Psoas muscle (tissue), 8 donors: ENCODE measurements at regions of chrX and their contacts with region 1.

Region 1: DNA sequence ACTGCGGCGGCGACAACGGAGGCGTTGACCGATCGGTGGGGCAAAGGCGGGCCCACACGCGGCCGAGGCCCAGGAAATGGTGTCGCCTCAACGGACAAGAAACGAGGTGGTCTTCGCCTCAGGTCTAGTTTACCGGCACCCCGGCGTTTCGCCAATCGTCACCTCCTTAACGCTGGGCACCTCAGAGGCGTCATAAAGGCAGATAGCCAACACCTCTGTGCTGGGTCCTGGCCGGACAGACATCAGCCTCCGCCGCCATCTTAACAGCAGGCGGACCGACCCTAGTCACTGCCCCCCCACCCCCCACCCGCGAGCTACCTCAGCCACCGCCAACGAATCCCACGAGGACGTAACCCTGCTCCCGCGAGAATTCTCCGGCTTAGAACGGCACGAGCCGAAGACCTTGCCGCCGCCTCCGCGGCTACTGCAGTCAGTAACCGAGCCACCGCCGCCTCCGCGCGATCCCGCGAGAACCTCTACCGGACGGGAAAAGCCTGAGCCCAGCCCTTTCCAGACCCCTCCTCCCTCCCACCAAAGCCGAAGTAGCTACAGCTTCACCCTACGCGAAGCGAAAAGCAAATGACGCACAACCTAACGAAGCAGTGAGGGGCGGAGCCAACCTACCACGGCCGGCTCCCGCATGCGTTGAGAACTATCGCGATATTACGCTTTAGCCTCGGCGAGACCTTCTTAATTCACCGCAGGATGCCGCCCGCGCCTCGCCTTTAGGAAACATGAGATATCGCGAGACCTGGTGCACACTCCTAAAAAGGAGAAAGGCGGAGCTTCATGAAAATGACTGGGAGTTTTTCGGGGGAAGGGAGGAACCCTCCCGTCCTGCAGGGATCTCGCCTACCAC is 2.7 kb downstream of the HUWE1 start:
- DNase-seq: peak; percentile 90 to 95
- ATAC-seq: peak; percentile 85 to 87 (median 86)
- H3K4me3 ChIP-seq: peak overlapping the region; percentile 78
- H3K27ac ChIP-seq: peak overlapping the region; percentile 92
- H3K4me1 ChIP-seq: peaks cover 8% of the 10 kb centered on the region
- H3K27me3 ChIP-seq: no peaks in the 10 kb centered on the region
- CTCF ChIP-seq: no peak

Region 2: GRCh38 chrX:54999717-55000598 is 1316.2 kb after region 1 on chrX and contains the start of gene APEX2:
- intact Hi-C with region 1: loop called in 1 of 2 experiments (anchors 10 kb)
- DNase-seq: peak; percentile 92 to 95
- ATAC-seq: peak; percentile 87 to 93 (median 92)
- H3K4me3 ChIP-seq: peak within 1 kb of the TSS; percentile 80
- H3K27ac ChIP-seq: peak within 1 kb of the TSS; percentile 90
- H3K4me1 ChIP-seq: no peaks in the 10 kb centered on the region
- H3K27me3 ChIP-seq: no peaks in the 10 kb centered on the region
- CTCF ChIP-seq: no peak
- total RNA-seq, gene APEX2: 6.9 to 14.9 (median 10.0) TPM